Endothelial cell of umbilical vein (primary cell): ENCODE measurements at regions of chr18 and their contacts with region 1.

Region 1: GRCh38 chr18:34809451-34810072 is 99.5 kb downstream of the DTNA start:
- DNase-seq: peak; percentile 31
- H3K4me3 ChIP-seq: no peak overlapping the region
- H3K27ac ChIP-seq: no peak overlapping the region
- H3K4me1 ChIP-seq: no peaks in the 10 kb centered on the region
- H3K27me3 ChIP-seq: no peaks in the 10 kb centered on the region
- CTCF ChIP-seq: peak; percentile 36 to 45
- POLR2A ChIP-seq: no peak

Region 2: GRCh38 chr18:34729264-34729663 is 80.3 kb before region 1 on chr18:
- CTCF ChIA-PET with region 1: no interaction called
- POLR2A ChIA-PET with region 1: no interaction called
- dilution Hi-C with region 1: no loop called
- intact Hi-C with region 1: no loop called
- DNase-seq: peak; percentile 24
- H3K4me3 ChIP-seq: no peak overlapping the region
- H3K27ac ChIP-seq: no peak overlapping the region
- H3K4me1 ChIP-seq: no peaks in the 10 kb centered on the region
- H3K27me3 ChIP-seq: no peaks in the 10 kb centered on the region
- CTCF ChIP-seq: peak; percentile 23 to 47
- POLR2A ChIP-seq: no peak

Region 3: GRCh38 chr18:34821749-34822148 is 12.2 kb after region 1 on chr18:
- CTCF ChIA-PET with region 1: interaction called, 10 read pairs
- POLR2A ChIA-PET with region 1: no interaction called
- dilution Hi-C with region 1: no loop called
- intact Hi-C with region 1: no loop called
- DNase-seq: no peak
- H3K4me3 ChIP-seq: no peak overlapping the region
- H3K27ac ChIP-seq: no peak overlapping the region
- H3K4me1 ChIP-seq: no peaks in the 10 kb centered on the region
- H3K27me3 ChIP-seq: no peaks in the 10 kb centered on the region
- CTCF ChIP-seq: no peak
- POLR2A ChIP-seq: no peak